ENCODE measurements at regions of chr4 and their contacts with region 1.

Region 1: GRCh38 chr4:153127760-153128494 is 76.3 kb upstream of the TRIM2 start:
- DNase-seq: peak; percentile 71 to 91 (median 84)
- ATAC-seq: peak; percentile 96 to 99
- H3K4me3 Mint-ChIP-seq: peak overlapping the region in 1 of 10 donors; percentile 36
- H3K27ac Mint-ChIP-seq: peak overlapping the region in 7 of 10 donors; percentile 25 to 93 (median 85)
- H3K4me1 Mint-ChIP-seq: peaks cover 2 to 7% (median 5%) of the 10 kb centered on the region in 4 donors
- H3K27me3 Mint-ChIP-seq: no peaks in the 10 kb centered on the region

Region 2: GRCh38 chr4:153083447-153083947 is 44.4 kb before region 1 on chr4:
- POLR2A ChIA-PET with region 1: interaction called, 17 read pairs
- DNase-seq: peak; percentile 12 to 72 (median 47)
- ATAC-seq: peak; percentile 41 to 58
- H3K4me3 Mint-ChIP-seq: peak overlapping the region in 7 of 10 donors; percentile 18 to 60 (median 51)
- H3K27ac Mint-ChIP-seq: peak overlapping the region in 7 of 10 donors; percentile 14 to 86 (median 75)
- H3K4me1 Mint-ChIP-seq: peaks cover 32 to 64% (median 56%) of the 10 kb centered on the region in 4 donors
- H3K27me3 Mint-ChIP-seq: no peaks in the 10 kb centered on the region

Region 3: DNA sequence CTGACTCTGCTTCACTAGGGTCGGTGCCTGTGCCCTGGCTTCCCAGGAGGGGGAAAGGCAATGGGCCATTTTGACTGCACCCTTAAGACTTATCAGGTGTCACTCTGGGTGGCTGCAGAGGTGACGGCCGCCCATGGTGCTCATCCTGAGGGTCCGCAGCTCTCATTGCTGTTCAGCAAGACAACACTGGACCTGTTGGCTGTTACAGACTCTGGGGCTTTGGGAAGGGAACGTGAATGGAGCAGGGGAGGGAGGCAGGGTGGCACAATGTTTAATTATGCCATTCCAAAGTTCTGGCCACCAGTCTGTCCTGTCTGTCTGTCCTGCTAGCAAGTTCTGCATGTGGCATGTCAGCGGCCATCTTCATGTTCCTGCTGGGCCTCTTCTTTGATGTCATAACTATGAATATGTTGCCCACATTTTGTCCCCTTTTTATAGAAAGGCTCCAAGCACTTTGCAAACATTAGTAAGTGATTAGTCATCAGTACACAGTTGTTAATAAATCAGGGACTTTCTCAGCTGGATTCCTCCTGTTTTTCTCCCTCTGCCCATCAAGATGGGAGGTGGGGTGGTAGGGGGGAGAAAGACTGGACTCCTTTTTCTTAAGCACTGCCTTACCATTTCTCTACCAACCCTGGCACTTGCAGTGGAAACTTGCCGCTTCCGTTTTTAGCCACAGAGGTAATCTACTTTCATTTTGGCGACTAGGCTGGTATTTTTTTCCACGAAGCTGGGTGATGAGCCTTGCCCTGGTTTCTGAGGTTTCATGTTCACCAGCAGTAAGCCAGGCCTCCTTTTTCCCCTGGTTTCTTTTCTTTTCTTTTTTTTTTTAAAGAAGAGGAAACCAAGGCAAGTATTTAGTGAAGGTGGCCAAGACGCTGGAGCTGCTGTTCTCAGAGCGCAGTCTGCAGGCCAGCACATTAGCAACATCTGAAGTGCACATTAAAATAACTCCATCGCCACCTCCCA is 12.3 kb before region 1 on chr4:
- POLR2A ChIA-PET with region 1: interaction called, 44 read pairs
- DNase-seq: peak; percentile 35 to 92 (median 78)
- ATAC-seq: peak; percentile 58 to 60
- H3K4me3 Mint-ChIP-seq: peak overlapping the region in 2 of 10 donors; percentile 67 to 81
- H3K27ac Mint-ChIP-seq: no peak overlapping the region
- H3K4me1 Mint-ChIP-seq: peaks cover 0 to 17% (median 9%) of the 10 kb centered on the region in 4 donors
- H3K27me3 Mint-ChIP-seq: no peaks in the 10 kb centered on the region

Region 4: DNA sequence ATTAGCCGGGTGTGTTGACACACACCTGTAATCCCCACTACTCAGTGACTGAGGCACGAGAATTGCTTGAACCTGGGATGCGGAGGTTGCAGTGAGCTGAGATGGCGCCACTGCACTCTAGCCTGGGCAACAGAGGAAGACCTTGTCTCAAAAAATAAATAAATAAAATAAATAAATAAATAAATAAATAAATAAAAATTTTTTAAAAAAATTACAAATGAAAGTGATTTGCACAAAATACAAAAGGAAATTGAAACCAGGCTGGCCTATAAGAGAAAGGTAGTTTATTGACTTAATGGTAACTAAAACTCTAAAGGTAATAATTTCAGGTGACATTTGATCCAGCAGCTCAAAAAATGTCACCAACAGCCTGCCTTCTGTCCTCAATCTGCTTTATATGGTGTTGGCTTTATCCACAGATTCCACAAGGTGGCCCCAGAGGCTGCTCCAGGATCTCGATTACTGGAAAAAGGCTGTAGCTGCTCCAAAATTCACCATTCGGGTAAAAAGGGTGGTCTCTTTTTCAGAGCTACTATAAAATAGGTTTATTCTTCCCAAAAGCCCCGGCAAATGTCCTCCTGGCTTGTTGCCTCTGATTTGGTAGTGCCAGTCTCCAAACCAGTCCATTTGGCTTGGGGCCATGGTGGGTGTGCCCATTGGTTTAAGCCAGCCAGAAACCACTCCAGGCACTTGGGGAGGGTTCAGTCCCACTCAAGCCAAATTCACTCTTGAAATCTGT is 14.9 kb after region 1 on chr4:
- POLR2A ChIA-PET with region 1: no interaction called
- DNase-seq: peak; percentile 22 to 79 (median 50)
- ATAC-seq: peak; percentile 66 to 77
- H3K4me3 Mint-ChIP-seq: no peak overlapping the region
- H3K27ac Mint-ChIP-seq: no peak overlapping the region
- H3K4me1 Mint-ChIP-seq: peaks cover 0 to 12% (median 0%) of the 10 kb centered on the region in 4 donors
- H3K27me3 Mint-ChIP-seq: peaks cover 0 to 6% (median 0%) of the 10 kb centered on the region in 5 donors

Region 5: DNA sequence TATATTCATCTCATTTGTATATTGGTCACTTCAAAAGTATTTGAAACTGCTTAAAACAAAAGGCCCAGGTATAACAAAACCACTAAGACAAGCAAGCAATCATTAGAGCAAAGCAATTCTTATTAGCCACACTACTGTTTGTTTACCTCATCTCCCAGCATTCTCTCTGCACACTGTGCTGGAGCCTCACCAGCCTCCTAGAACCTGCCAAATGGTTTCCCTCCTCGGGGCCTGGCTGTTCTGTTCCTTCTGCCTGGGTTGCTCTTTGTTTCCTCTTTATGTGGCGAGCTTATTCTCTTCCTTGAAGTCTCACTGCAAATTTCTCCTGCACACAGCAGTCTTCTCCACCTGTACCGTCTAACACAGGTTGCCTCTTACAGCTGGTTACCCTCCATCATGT is 149.0 kb after region 1 on chr4:
- POLR2A ChIA-PET with region 1: no interaction called
- DNase-seq: no peak
- ATAC-seq: no peak
- H3K4me3 Mint-ChIP-seq: peak overlapping the region in 1 of 10 donors; percentile 35
- H3K27ac Mint-ChIP-seq: no peak overlapping the region
- H3K4me1 Mint-ChIP-seq: peaks cover 0 to 6% (median 2%) of the 10 kb centered on the region in 4 donors
- H3K27me3 Mint-ChIP-seq: peaks cover 0 to 3% (median 0%) of the 10 kb centered on the region in 5 donors

Measured in naive thymus-derived CD8-positive, alpha-beta T cell (primary cell).